SK-N-SH (cell line): ENCODE measurements at regions of chr12 and their contacts with region 1.

Region 1: DNA sequence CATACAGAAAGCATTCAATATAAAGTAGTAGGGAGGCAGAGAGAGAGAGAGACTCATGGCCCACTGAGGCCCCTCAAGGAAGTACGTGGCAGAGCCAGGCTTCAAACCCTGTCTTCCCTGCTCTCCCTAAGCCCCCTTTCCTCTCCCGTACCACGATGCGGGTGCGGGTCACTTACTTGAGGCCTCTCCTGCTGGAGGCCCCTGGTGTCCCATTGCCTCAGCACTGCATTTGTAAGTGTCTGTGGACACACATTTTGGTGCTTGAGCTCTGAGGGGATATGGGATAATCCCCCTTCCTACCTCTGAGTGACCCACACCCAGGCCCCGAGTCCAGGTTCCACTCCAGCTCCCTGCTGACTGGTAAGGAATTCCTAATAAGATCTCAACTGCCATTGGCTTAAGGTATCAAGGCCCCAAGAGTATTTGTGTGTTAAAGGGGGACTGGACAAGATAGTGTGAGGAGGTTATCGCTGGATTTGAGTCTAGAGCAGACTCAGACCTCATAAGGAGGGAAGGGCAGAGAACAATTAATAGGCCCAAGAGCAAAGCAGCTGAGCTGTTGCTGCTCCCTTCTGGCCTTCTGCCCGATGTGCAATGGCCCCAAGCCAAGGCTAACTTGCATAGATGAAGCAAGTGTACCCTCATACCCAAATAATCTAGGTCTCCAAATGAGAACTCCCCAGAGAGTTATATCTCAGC is 71.9 kb downstream of the CRACR2A start:
- DNase-seq: peak; percentile 51
- H3K4me3 ChIP-seq: no peak overlapping the region
- H3K27ac ChIP-seq: no peak overlapping the region
- H3K4me1 ChIP-seq: peaks cover 0 to 29% of the 10 kb centered on the region in 2 experiments; a peak in 2 of 4 replicates
- H3K27me3 ChIP-seq: no peaks in the 10 kb centered on the region; the same call in 1 of the 2 replicates
- CTCF ChIP-seq: peak; percentile 42
- EP300 ChIP-seq: no peak
- RAD21 ChIP-seq: peak; percentile 72

Region 2: GRCh38 chr12:3342056-3342455 is 339.0 kb before region 1 on chr12:
- CTCF ChIA-PET with region 1: interaction called, 11 read pairs
- POLR2A ChIA-PET with region 1: no interaction called
- DNase-seq: peak; percentile 82
- H3K4me3 ChIP-seq: peak overlapping the region in 1 of 2 experiments; percentile 32; a peak in 1 of 4 replicates
- H3K27ac ChIP-seq: no peak overlapping the region
- H3K4me1 ChIP-seq: peaks cover 0 to 2% of the 10 kb centered on the region in 2 experiments; a peak in 1 of 4 replicates
- H3K27me3 ChIP-seq: peaks cover 17% of the 10 kb centered on the region; the same call in 1 of the 2 replicates
- CTCF ChIP-seq: peak; percentile 48
- EP300 ChIP-seq: no peak
- RAD21 ChIP-seq: peak; percentile 71

Region 3: GRCh38 chr12:3667485-3667884 is 13.6 kb before region 1 on chr12:
- CTCF ChIA-PET with region 1: interaction called, 21 read pairs
- POLR2A ChIA-PET with region 1: interaction called, 3 read pairs
- DNase-seq: no peak
- H3K4me3 ChIP-seq: no peak overlapping the region
- H3K27ac ChIP-seq: no peak overlapping the region
- H3K4me1 ChIP-seq: peaks cover 0 to 6% of the 10 kb centered on the region in 2 experiments; a peak in 1 of 4 replicates
- H3K27me3 ChIP-seq: no peaks in the 10 kb centered on the region
- CTCF ChIP-seq: peak; percentile 14
- EP300 ChIP-seq: no peak
- RAD21 ChIP-seq: peak; percentile 26

Region 4: DNA sequence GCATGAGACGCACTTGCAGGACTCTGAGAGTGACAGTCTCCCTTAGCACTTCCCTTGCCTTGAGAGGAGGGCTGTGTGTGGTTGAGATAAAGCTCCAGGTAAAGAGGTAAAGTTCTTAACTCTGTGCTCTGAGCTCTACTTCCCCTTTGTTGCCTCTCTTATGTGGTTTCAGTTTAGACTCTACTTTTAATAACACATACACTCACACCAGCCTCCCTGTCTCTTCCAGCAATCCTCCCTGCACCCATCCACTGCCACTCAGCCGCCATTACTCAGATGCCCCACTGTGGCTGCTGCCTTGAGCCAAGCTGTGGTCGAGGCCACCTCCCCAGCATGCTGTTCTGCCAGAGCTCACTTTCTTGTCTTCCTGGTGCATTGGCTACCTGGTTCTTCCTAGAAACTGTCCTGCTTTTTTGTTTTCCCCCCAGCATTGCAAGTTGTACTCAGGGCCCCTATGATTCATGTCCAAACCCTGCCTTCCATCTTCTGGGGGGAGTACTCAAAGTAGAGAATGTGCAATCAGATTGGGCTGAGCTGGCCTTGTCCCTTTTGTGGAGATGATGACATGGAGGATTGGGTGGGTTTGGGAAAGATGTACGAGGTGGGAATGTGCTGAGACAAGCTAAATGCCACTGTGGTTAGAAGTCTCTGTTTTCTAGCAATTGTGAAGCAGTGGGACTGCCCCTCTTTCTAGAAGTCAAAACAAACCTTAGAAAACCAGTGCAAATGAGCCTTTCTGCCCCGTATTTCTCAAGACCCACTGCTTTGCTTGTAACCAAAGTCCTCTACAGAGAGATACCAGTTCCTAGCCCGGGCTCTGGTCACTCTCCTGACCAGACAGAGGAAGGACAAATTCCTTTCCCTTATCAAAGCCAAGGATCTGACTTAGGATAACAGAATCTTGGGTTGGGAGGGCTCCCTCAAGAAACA is 307.7 kb after region 1 on chr12:
- CTCF ChIA-PET with region 1: no interaction called
- POLR2A ChIA-PET with region 1: no interaction called
- DNase-seq: no peak
- H3K4me3 ChIP-seq: no peak overlapping the region
- H3K27ac ChIP-seq: no peak overlapping the region
- H3K4me1 ChIP-seq: no peaks in the 10 kb centered on the region
- H3K27me3 ChIP-seq: peaks cover 48% of the 10 kb centered on the region
- CTCF ChIP-seq: no peak
- EP300 ChIP-seq: no peak
- RAD21 ChIP-seq: no peak